ENCODE measurements at regions of chr19 and their contacts with region 1.

Region 1: GRCh38 chr19:53195265-53195903 is 2.2 kb upstream of the ZNF665 start:
- DNase-seq: peak; percentile 70 to 88
- ATAC-seq: peak; percentile 47 to 63 (median 53)
- H3K4me3 ChIP-seq: no peak overlapping the region
- H3K4me3 Mint-ChIP-seq: peak overlapping the region; percentile 7
- H3K27ac ChIP-seq: no peak overlapping the region
- H3K27ac Mint-ChIP-seq: peak overlapping the region; percentile 55 to 97
- H3K4me1 ChIP-seq: peaks cover 27% of the 10 kb centered on the region
- H3K4me1 Mint-ChIP-seq: peaks cover 29 to 34% of the 10 kb centered on the region in 2 donors
- H3K27me3 ChIP-seq: no peaks in the 10 kb centered on the region
- H3K27me3 Mint-ChIP-seq: no peaks in the 10 kb centered on the region
- CTCF ChIP-seq: peak; percentile 91

Region 2: DNA sequence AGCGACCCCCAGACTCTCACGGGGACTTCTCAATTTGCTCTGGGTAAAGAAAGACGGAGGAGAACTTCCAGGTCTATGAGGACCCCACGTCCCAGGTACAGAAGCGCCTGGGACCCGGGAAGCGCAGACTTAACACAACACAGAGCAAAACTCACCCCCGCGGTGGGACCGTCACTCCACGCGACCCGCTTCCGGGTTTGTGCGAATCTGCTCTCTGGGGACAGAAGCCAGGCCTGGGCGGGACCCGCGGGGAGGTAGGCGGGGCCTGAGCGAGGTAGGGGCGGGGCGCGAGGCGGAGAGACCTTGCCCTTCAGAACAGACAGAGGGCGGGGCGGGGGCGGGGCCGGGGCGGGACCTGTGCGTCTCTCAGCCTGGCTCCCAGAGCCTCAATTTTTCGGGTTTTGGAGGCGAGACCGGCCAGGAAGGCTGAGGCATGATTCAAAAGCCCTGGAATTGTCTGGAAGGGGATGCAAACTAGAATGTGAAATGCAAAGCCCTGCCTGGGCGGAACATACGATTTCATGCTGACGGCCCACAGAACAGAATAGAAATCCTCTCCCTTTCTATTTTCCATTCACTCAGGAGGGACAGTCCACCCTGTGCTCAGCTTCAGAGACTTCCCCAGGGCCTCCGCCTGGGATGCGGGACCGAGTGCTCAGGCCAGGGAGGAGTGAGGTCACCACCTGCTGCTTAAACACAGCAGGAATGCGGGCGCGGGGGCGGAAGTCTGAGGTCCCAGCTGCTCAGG is 252.8 kb before region 1 on chr19:
- intact Hi-C with region 1: no loop called
- DNase-seq: peak; percentile 94 to 100
- ATAC-seq: peak; percentile 99 to 100 (median 99)
- H3K4me3 ChIP-seq: peak overlapping the region; percentile 74
- H3K4me3 Mint-ChIP-seq: peak overlapping the region; percentile 97
- H3K27ac ChIP-seq: peak overlapping the region; percentile 75
- H3K27ac Mint-ChIP-seq: peak overlapping the region; percentile 87 to 91
- H3K4me1 ChIP-seq: peaks cover 21% of the 10 kb centered on the region
- H3K4me1 Mint-ChIP-seq: peaks cover 24 to 29% of the 10 kb centered on the region in 2 donors
- H3K27me3 ChIP-seq: no peaks in the 10 kb centered on the region
- H3K27me3 Mint-ChIP-seq: no peaks in the 10 kb centered on the region
- CTCF ChIP-seq: no peak

Region 3: DNA sequence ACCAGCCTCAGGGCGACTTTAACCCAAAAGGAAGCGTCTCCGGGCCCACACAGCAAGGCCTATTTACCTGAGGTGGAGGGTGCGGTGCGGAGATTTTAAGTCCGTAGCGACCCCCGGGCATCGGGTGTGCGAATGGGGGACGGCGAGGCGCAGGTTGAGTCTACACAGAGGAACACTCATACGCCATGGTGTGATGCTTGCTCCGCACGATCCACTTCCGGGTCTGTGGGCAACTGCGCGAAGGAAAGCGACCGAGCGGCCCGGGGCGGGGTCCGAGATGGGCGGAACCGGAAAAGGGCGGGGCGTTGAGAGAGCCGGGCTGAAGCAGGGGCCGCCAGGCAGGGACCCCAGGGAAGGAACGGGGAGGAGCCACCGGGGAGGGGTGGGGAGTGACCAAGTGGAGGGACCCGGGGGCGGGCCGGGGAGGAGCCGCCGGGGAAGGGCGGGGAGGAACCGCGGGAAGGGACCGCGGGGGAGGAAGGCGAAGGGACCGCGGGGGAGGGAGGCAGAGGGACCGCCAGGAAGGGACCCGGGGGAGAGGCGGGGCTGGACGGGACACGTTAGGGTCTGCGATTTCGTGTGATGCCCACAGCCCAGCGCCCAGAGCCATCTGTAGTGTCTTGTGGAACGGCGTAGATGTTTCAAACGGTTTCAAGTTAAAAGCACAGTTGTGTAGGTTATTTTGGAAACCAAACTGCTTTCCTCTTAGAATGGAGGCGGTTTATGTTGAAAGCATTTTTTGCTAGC is 92.0 kb before region 1 on chr19 and contains the start of gene ZNF160:
- intact Hi-C with region 1: loop called (anchors 5 kb)
- DNase-seq: peak; percentile 96 to 98
- ATAC-seq: peak; percentile 93 to 98 (median 93)
- H3K4me3 ChIP-seq: peak within 1 kb of the TSS; percentile 81
- H3K4me3 Mint-ChIP-seq: peak within 1 kb of the TSS; percentile 87
- H3K27ac ChIP-seq: peak within 1 kb of the TSS; percentile 94
- H3K27ac Mint-ChIP-seq: peak within 1 kb of the TSS; percentile 86 to 90
- H3K4me1 ChIP-seq: peaks cover 20% of the 10 kb centered on the region
- H3K4me1 Mint-ChIP-seq: peaks cover 28 to 35% of the 10 kb centered on the region in 2 donors
- H3K27me3 ChIP-seq: no peaks in the 10 kb centered on the region
- H3K27me3 Mint-ChIP-seq: no peaks in the 10 kb centered on the region
- CTCF ChIP-seq: no peak
- total RNA-seq, gene ZNF160: 43.9 to 54.9 (median 54.7) TPM

Region 4: GRCh38 chr19:53254411-53255341 is 59.3 kb after region 1 on chr19 and contains the start of gene ZNF677:
- intact Hi-C with region 1: loop called (anchors 5 kb)
- DNase-seq: peak; percentile 85 to 87
- ATAC-seq: peak; percentile 99 to 100 (median 100)
- H3K4me3 ChIP-seq: peak within 1 kb of the TSS; percentile 71
- H3K4me3 Mint-ChIP-seq: peak within 1 kb of the TSS; percentile 76
- H3K27ac ChIP-seq: peak within 1 kb of the TSS; percentile 76
- H3K27ac Mint-ChIP-seq: peak within 1 kb of the TSS; percentile 63 to 89
- H3K4me1 ChIP-seq: peaks cover 11% of the 10 kb centered on the region
- H3K4me1 Mint-ChIP-seq: peaks cover 11% of the 10 kb centered on the region in 2 donors
- H3K27me3 ChIP-seq: no peaks in the 10 kb centered on the region
- H3K27me3 Mint-ChIP-seq: peaks cover 8 to 11% of the 10 kb centered on the region in 2 donors
- CTCF ChIP-seq: no peak
- total RNA-seq, gene ZNF677: 16.4 to 19.8 (median 18.4) TPM

Region 5: DNA sequence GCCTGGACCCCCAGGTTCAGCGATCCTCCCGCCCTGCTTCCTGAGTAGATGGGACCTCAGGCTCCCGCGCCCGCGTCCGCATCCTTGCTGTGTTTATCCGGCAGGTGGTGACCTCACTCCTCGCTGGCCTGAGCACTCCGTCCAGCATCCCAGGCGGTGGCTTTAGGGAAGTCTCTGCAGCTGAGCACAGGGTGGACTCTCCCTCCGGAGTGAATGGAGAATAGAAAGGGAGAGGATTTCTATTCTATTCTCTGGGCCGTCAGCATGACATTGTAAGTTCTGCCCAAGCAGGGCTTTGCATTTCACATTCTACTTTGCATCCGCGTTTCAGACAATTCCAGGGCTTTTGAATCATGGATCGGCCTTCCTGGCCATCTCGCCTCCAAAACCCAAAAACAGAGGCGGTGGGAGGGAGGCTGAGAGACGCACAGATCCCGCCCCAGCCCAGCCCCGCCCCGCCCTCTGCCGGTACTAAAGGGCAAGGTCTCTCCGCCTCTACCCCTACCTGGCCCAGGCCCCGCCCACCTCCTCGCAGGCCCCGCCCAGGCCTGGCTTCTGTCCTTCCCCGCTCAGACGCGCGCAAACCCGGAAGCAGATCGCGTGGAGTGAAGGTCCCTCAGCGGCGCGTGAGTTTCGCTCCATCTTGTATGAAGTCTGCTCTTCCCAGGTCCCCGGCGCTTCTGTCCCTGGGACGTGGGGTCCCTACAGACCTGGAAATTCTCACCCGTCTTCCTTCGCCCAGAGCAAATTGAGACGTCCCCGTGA is 169.9 kb after region 1 on chr19 and contains the start of gene ZNF525:
- intact Hi-C with region 1: loop called (anchors 1 kb)
- DNase-seq: peak; percentile 97 to 99
- ATAC-seq: peak; percentile 99 to 100 (median 100)
- H3K4me3 ChIP-seq: peak within 1 kb of the TSS; percentile 73
- H3K4me3 Mint-ChIP-seq: peak within 1 kb of the TSS; percentile 94
- H3K27ac ChIP-seq: peak within 1 kb of the TSS; percentile 78
- H3K27ac Mint-ChIP-seq: peak within 1 kb of the TSS; percentile 85 to 90
- H3K4me1 ChIP-seq: peaks cover 6% of the 10 kb centered on the region
- H3K4me1 Mint-ChIP-seq: peaks cover 30 to 36% of the 10 kb centered on the region in 2 donors
- H3K27me3 ChIP-seq: no peaks in the 10 kb centered on the region
- H3K27me3 Mint-ChIP-seq: no peaks in the 10 kb centered on the region
- CTCF ChIP-seq: peak; percentile 65
- total RNA-seq, gene ZNF525: 20.7 to 27.0 (median 21.8) TPM

Region 6: GRCh38 chr19:53431399-53432087 is 236.2 kb after region 1 on chr19 and contains the start of gene ZNF761:
- intact Hi-C with region 1: loop called (anchors 5 kb)
- DNase-seq: peak; percentile 98 to 99
- ATAC-seq: peak; percentile 98 to 100 (median 99)
- H3K4me3 ChIP-seq: peak within 1 kb of the TSS; percentile 77
- H3K4me3 Mint-ChIP-seq: peak within 1 kb of the TSS; percentile 95
- H3K27ac ChIP-seq: peak within 1 kb of the TSS; percentile 77
- H3K27ac Mint-ChIP-seq: peak within 1 kb of the TSS; percentile 90 to 92
- H3K4me1 ChIP-seq: peaks cover 14% of the 10 kb centered on the region
- H3K4me1 Mint-ChIP-seq: peaks cover 27 to 32% of the 10 kb centered on the region in 2 donors
- H3K27me3 ChIP-seq: no peaks in the 10 kb centered on the region
- H3K27me3 Mint-ChIP-seq: no peaks in the 10 kb centered on the region
- CTCF ChIP-seq: peak; percentile 36
- total RNA-seq, gene ZNF761: 6.8 to 8.9 (median 8.5) TPM

Region 7: DNA sequence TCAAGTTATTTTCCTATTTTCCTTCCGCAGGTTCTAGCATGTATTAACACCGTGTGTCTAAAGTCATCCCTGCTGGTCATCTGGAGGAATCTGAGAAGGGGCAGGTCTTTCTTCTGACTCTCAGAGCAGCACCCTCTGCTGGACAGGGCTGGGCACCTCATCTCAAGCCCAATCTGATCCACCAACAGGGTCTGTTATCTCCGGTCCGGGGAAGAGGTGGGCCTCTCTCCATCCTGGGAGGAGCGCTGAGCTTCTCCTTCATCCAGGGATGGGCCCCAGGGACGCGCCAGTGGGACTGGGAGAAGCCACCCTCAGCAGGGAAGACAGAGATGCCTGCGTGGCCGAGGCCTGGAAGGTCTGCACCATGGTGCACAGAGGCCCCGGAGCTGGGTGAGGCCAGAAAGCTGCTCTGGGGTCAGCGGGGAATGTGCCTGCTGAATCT is 316.6 kb after region 1 on chr19:
- intact Hi-C with region 1: loop called (anchors 1 kb)
- DNase-seq: peak; percentile 47 to 72
- ATAC-seq: peak; percentile 79 to 99 (median 95)
- H3K4me3 ChIP-seq: no peak overlapping the region
- H3K4me3 Mint-ChIP-seq: no peak overlapping the region
- H3K27ac ChIP-seq: no peak overlapping the region
- H3K27ac Mint-ChIP-seq: no peak overlapping the region
- H3K4me1 ChIP-seq: no peaks in the 10 kb centered on the region
- H3K4me1 Mint-ChIP-seq: no peaks in the 10 kb centered on the region
- H3K27me3 ChIP-seq: no peaks in the 10 kb centered on the region
- H3K27me3 Mint-ChIP-seq: peaks cover 5 to 17% of the 10 kb centered on the region in 2 donors
- CTCF ChIP-seq: peak; percentile 75

Measured in natural killer cell (primary cell).